ENCODE measurements at regions of chr17 and their contacts with region 1.

Region 1: GRCh38 chr17:79045842-79046196 is 21.9 kb downstream of the C1QTNF1 start:
- DNase-seq: peak; percentile 31 to 80 (median 55)
- ATAC-seq: peak; percentile 90
- H3K4me3 ChIP-seq: no peak overlapping the region
- H3K4me3 Mint-ChIP-seq: no peak overlapping the region
- H3K27ac ChIP-seq: no peak overlapping the region
- H3K27ac Mint-ChIP-seq: no peak overlapping the region
- H3K4me1 ChIP-seq: peaks cover 8% of the 10 kb centered on the region
- H3K4me1 Mint-ChIP-seq: no peaks in the 10 kb centered on the region
- H3K27me3 ChIP-seq: peaks cover 0 to 6% of the 10 kb centered on the region in 2 experiments
- H3K27me3 Mint-ChIP-seq: peaks cover 14% of the 10 kb centered on the region
- CTCF ChIP-seq: peak; percentile 80

Region 2: GRCh38 chr17:78986048-78986648 is 59.7 kb before region 1 on chr17:
- CTCF ChIA-PET with region 1: interaction called, 4 read pairs
- POLR2A ChIA-PET with region 1: no interaction called
- intact Hi-C with region 1: loop called (anchors 1 to 5 kb)
- DNase-seq: peak in 5 of 14 experiments; percentile 15 to 62 (median 39)
- ATAC-seq: peak; percentile 77
- H3K4me3 ChIP-seq: peak overlapping the region; percentile 9
- H3K4me3 Mint-ChIP-seq: peak overlapping the region; percentile 56
- H3K27ac ChIP-seq: no peak overlapping the region
- H3K27ac Mint-ChIP-seq: no peak overlapping the region
- H3K4me1 ChIP-seq: peaks cover 16% of the 10 kb centered on the region
- H3K4me1 Mint-ChIP-seq: peaks cover 16% of the 10 kb centered on the region
- H3K27me3 ChIP-seq: no peaks in the 10 kb centered on the region
- H3K27me3 Mint-ChIP-seq: no peaks in the 10 kb centered on the region
- CTCF ChIP-seq: peak; percentile 45

Region 3: GRCh38 chr17:79019632-79020584 is 25.9 kb before region 1 on chr17:
- CTCF ChIA-PET with region 1: no interaction called
- POLR2A ChIA-PET with region 1: no interaction called
- intact Hi-C with region 1: loop called in 1 of 2 experiments (anchors 1 kb)
- DNase-seq: peak in 13 of 14 experiments; percentile 26 to 74 (median 39)
- ATAC-seq: peak; percentile 56
- H3K4me3 ChIP-seq: no peak overlapping the region
- H3K4me3 Mint-ChIP-seq: peak overlapping the region; percentile 18
- H3K27ac ChIP-seq: no peak overlapping the region
- H3K27ac Mint-ChIP-seq: no peak overlapping the region
- H3K4me1 ChIP-seq: peaks cover 15% of the 10 kb centered on the region
- H3K4me1 Mint-ChIP-seq: peaks cover 8% of the 10 kb centered on the region
- H3K27me3 ChIP-seq: peaks cover 11 to 15% of the 10 kb centered on the region in 2 experiments
- H3K27me3 Mint-ChIP-seq: peaks cover 41% of the 10 kb centered on the region
- CTCF ChIP-seq: peak; percentile 67

Region 4: DNA sequence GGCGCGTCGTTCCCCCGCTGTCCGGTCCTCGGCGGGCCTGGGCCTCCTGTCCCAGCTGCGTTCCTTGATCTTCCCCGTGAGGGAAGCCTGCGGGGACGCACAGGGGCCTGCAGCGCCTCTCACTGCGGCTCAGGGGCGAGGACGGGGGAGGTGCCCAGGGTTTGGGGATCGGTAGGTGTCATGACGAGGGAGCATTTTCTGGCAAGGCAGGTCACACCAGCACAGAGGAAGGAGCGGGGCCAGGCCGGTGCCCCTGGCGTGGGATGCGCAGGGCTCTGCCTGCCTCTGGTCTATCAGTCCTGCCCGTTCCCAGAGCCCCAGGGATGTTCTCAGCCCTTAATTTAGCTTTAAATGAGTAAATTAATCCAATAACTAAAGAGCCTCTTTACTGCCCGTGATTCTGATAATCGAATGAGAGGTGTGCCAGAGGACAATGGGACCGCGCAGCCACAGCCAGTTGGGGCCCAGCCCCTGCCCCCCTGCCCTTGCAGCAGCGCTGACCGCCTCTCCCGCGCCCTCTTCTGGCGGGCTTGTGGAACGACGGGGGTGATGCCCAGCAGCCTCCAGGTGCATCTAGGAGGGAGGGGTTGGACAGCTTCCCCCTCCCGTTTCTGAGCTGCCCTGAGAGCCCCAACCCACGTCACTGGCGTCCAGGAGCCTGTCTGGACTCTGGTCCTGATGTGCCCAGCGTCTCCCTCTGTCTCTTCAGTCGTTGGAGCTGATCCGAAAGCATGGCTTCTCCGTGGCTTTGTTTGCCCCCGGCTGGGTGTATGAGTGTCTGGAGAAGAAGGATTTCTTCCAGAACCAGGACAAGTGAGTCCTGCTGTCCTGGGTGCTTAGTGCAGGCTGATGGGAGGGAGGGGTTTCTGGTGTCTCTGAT is 36.7 kb after region 1 on chr17:
- CTCF ChIA-PET with region 1: interaction called, 3 read pairs
- POLR2A ChIA-PET with region 1: no interaction called
- intact Hi-C with region 1: loop called (anchors 2 kb)
- DNase-seq: peak in 13 of 14 experiments; percentile 18 to 75 (median 44)
- ATAC-seq: peak; percentile 60
- H3K4me3 ChIP-seq: no peak overlapping the region
- H3K4me3 Mint-ChIP-seq: no peak overlapping the region
- H3K27ac ChIP-seq: no peak overlapping the region
- H3K27ac Mint-ChIP-seq: no peak overlapping the region
- H3K4me1 ChIP-seq: peaks cover 10% of the 10 kb centered on the region
- H3K4me1 Mint-ChIP-seq: no peaks in the 10 kb centered on the region
- H3K27me3 ChIP-seq: no peaks in the 10 kb centered on the region
- H3K27me3 Mint-ChIP-seq: no peaks in the 10 kb centered on the region
- CTCF ChIP-seq: peak; percentile 77

Region 5: DNA sequence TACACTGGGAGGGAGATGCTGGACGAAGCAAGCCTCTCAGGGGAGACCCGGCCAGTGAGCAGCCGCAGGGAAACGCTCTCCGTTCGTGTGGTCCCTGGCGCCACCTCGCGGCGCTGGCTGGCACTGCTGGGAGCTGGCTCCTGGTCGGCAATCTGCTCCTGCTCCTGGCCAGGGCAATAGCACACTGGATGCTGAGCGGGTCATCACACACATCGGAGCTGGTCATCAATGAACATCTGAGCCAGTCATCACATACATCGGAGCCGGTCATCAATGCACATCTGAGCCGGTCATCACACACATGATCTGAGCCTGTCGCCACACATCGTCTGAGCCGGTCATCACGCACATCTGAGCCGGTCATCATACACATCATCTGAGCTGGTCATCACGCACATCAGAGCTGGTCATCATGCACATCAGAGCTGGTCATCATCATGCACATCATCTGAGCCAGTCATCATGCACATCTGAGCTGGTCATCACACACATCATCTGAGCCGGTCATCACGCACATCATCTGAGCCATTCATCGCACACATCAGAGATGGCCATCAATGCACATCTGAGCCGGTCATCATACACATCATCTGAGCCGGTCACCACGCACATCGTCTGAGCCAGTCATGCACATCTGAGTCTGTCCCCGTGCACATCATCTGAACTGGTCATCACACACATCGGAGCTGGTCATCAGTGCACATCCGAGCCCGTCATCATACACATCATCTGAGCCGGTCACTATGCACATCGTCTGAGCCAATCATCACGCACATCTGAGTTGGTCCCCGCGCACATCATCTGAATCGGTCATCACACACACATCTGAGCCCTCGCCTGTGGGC is 347.8 kb after region 1 on chr17:
- CTCF ChIA-PET with region 1: no interaction called
- POLR2A ChIA-PET with region 1: no interaction called
- intact Hi-C with region 1: loop called (anchors 1 kb)
- DNase-seq: peak; percentile 47 to 77 (median 62)
- ATAC-seq: peak; percentile 76
- H3K4me3 ChIP-seq: no peak overlapping the region
- H3K4me3 Mint-ChIP-seq: no peak overlapping the region
- H3K27ac ChIP-seq: no peak overlapping the region
- H3K27ac Mint-ChIP-seq: no peak overlapping the region
- H3K4me1 ChIP-seq: peaks cover 7% of the 10 kb centered on the region
- H3K4me1 Mint-ChIP-seq: no peaks in the 10 kb centered on the region
- H3K27me3 ChIP-seq: peaks cover 24 to 28% of the 10 kb centered on the region in 2 experiments
- H3K27me3 Mint-ChIP-seq: peaks cover 72% of the 10 kb centered on the region
- CTCF ChIP-seq: peak; percentile 73